Activated CD8-positive, alpha-beta T cell treated with anti-CD3 and anti-CD28 coated beads, Interleukin-2, amount 10 ng/mL, durations not matched to agents 7 days and 5 days (primary cell): ENCODE measurements at regions of chr12 and their contacts with region 1.

Region 1: DNA sequence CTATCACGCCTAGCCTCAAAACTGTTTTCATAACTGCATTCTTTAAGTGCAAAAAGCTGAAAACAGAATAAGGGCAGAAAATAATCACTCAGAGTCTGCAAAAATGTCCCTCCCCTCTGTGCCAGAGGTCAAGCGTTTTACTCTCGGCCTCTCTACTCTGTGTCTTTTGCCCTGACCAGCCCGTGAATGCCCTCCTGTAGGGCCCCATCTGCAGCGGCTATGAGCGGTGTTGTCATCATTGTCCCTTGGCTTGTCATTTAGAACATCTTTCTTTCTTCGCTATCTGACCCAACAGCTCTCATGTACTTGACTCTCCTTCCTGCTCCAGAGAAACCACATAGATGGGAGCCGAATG is 21.7 kb downstream of the ELK3 start:
- DNase-seq: no peak
- ATAC-seq: no peak
- H3K4me3 Mint-ChIP-seq: no peak overlapping the region
- H3K27ac Mint-ChIP-seq: no peak overlapping the region
- H3K4me1 Mint-ChIP-seq: peaks cover 51% of the 10 kb centered on the region
- H3K27me3 Mint-ChIP-seq: no peaks in the 10 kb centered on the region

Region 2: DNA sequence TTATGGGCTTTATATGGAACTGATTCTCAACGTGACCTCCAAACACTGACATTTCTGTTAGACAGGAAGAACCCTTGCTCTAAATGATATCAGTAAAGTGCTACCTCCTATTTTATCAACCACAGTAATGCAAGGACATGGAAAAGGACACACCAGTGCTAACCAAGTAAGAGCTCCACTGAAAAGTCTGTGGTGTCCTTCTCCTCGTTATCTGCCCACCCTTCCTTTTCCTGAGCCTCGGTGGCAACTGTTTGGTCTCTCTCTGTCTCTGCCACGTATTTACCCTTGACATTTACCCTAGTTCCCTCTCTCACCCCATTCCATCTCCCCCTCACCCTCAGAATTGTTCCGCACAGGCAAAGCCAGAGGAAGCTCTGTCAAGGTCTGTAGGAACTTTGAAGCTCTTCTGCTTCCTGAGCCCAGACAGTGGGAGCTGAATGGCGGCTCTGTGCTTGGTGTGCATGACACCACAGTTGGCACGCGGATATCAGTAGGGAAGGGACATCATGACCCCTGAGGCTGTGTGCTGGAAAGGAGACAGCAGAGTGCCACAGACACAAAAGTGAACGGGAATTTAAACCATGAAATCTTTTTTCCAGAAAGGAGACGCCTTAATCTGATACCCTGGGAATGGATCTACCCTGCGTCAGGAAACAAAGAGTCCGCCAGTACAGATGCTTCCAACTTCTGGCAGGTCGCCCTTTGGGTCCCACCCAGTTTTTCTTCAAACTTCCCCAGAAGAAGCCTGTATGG is 476.2 kb before region 1 on chr12:
- CTCF ChIA-PET with region 1: no interaction called
- POLR2A ChIA-PET with region 1: no interaction called
- DNase-seq: no peak
- ATAC-seq: no peak
- H3K4me3 Mint-ChIP-seq: no peak overlapping the region
- H3K27ac Mint-ChIP-seq: no peak overlapping the region
- H3K4me1 Mint-ChIP-seq: no peaks in the 10 kb centered on the region
- H3K27me3 Mint-ChIP-seq: peaks cover 5% of the 10 kb centered on the region

Region 3: DNA sequence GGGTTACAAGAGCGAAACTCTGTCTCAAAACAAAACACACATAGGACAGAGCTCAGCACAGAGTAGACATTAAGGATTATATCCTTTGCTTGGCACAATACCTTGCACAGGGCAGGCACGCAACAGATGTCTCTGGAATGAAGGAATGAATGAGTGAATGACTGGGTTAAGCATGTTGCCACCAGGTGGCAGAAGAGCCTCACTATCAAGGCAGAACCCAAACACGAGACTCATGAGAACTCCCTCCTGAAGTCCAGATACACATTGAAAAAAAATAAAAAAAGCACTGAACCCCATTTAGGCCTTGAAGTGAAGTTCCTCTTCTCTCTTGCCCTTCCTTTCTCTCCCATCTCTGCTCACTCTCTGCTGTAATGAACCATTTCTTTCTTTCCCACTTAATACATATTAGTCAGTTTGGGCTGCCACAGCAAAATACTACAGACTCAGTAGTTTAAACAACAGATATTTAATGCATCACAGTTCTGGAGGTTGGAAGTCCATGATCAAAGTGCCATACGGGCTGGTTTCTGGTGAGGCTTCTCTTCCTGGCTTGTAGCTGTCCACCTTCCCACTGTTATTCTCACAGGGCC is 153.9 kb before region 1 on chr12:
- CTCF ChIA-PET with region 1: interaction called, 130 read pairs
- POLR2A ChIA-PET with region 1: no interaction called
- DNase-seq: peak; percentile 85
- ATAC-seq: peak; percentile 80
- H3K4me3 Mint-ChIP-seq: no peak overlapping the region
- H3K27ac Mint-ChIP-seq: peak overlapping the region; percentile 5
- H3K4me1 Mint-ChIP-seq: peaks cover 24% of the 10 kb centered on the region
- H3K27me3 Mint-ChIP-seq: no peaks in the 10 kb centered on the region

Region 4: GRCh38 chr12:96177013-96177412 is 38.9 kb before region 1 on chr12:
- CTCF ChIA-PET with region 1: interaction called, 11 read pairs
- POLR2A ChIA-PET with region 1: no interaction called
- DNase-seq: peak; percentile 74
- ATAC-seq: peak; percentile 93
- H3K4me3 Mint-ChIP-seq: no peak overlapping the region
- H3K27ac Mint-ChIP-seq: peak overlapping the region; percentile 82
- H3K4me1 Mint-ChIP-seq: peaks cover 16% of the 10 kb centered on the region
- H3K27me3 Mint-ChIP-seq: peaks cover 3% of the 10 kb centered on the region

Region 5: GRCh38 chr12:96228566-96229248 is 12.8 kb after region 1 on chr12:
- CTCF ChIA-PET with region 1: interaction called, 21 read pairs
- POLR2A ChIA-PET with region 1: interaction called, 3 read pairs
- DNase-seq: no peak
- ATAC-seq: no peak
- H3K4me3 Mint-ChIP-seq: no peak overlapping the region
- H3K27ac Mint-ChIP-seq: no peak overlapping the region
- H3K4me1 Mint-ChIP-seq: peaks cover 7% of the 10 kb centered on the region
- H3K27me3 Mint-ChIP-seq: no peaks in the 10 kb centered on the region

Region 6: DNA sequence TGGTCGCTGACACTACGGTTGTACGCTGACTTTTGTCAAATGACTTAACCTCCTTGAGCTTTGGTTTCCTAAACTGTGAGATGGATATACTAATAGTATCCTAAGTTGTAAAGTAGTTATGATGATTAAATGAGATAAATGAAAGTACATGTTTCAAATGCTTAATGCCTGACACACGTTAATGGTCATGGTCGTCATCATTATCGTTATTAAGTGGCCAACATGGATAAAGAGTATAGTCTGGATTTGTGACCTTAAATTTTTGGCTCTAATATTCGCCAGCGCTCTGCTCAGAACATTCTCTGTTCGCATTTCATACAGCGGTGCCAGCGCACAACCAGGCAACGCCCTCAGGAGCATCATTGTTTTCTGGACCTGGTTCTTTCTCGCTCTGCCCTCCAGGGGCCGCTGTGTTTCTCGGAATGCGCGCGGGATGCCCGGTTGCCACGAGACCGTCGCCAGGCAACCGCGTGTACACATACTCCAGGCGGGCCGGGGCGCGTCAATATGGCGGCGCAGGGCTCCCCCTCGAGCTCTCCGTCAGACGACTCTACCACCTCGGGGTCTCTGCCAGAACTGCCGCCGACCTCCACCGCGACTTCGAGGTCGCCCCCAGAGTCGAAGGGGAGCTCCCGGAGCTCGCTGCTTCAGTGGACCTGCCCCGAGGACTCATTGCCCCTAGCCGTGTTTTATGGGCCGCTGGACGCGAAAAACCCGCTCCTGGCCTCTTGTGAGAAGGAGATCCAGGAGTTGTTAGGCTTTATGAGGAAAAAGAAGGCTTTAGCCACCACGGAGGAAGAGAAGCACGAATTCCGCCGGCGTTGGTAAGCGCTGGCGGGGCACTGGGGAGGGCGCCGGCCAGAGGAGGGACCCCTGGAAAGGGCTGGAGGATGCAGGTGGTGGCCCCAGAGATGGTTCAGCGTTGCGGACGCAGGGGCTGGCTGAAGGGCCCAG is 273.5 kb after region 1 on chr12 and contains the start of gene CFAP54:
- CTCF ChIA-PET with region 1: interaction called, 12 read pairs
- POLR2A ChIA-PET with region 1: no interaction called
- DNase-seq: peak; percentile 96
- ATAC-seq: peak; percentile 84
- H3K4me3 Mint-ChIP-seq: peak within 1 kb of the TSS; percentile 86
- H3K27ac Mint-ChIP-seq: peak within 1 kb of the TSS; percentile 53
- H3K4me1 Mint-ChIP-seq: peaks cover 35% of the 10 kb centered on the region
- H3K27me3 Mint-ChIP-seq: peaks cover 12% of the 10 kb centered on the region
- total RNA-seq, gene CFAP54: 0.18 to 1.2 TPM